ENCODE measurements at regions of chr11 and their contacts with region 1.

Region 1: GRCh38 chr11:44065841-44066731 is at the start of gene ACCS:
- DNase-seq: peak; percentile 87 to 95
- ATAC-seq: peak; percentile 92 to 93
- H3K4me3 ChIP-seq: peak within 1 kb of the TSS; percentile 66 to 80 (median 72)
- H3K27ac ChIP-seq: peak within 1 kb of the TSS; percentile 80 to 86 (median 86)
- H3K4me1 ChIP-seq: peaks cover 5 to 7% of the 10 kb centered on the region in 2 donors
- H3K27me3 ChIP-seq: no peaks in the 10 kb centered on the region
- CTCF ChIP-seq: peak; percentile 47 to 86 (median 67)
- POLR2A ChIP-seq: peak; percentile 39 to 53
- total RNA-seq, gene ACCS: 0.58 to 4.0 (median 1.8) TPM

Region 2: DNA sequence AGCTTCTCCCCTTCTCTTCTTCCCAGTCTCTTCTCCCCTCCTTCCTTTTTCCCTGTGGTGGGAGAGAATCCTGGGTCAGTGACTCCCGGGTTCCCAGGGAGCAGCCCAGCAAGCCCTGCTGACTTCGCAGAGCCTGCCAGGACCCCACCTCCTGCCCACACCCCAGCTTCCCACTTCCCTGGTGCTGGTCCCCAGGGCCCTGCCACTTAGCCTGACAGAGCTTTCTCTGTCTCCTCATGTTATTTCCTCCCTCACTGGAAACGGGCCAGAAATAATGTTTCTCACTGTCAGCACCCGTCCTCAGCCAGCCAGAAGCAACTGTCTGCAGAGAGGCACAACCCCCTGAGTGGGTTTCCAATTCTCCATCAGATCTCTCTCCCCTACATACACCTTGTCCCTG is 96.5 kb before region 1 on chr11:
- in situ Hi-C with region 1: loop called in 1 of 4 experiments (anchors 25 kb)
- intact Hi-C with region 1: no loop called
- DNase-seq: no peak
- ATAC-seq: no peak
- H3K4me3 ChIP-seq: no peak overlapping the region
- H3K27ac ChIP-seq: no peak overlapping the region
- H3K4me1 ChIP-seq: no peaks in the 10 kb centered on the region
- H3K27me3 ChIP-seq: no peaks in the 10 kb centered on the region
- CTCF ChIP-seq: no peak
- POLR2A ChIP-seq: no peak

Region 3: DNA sequence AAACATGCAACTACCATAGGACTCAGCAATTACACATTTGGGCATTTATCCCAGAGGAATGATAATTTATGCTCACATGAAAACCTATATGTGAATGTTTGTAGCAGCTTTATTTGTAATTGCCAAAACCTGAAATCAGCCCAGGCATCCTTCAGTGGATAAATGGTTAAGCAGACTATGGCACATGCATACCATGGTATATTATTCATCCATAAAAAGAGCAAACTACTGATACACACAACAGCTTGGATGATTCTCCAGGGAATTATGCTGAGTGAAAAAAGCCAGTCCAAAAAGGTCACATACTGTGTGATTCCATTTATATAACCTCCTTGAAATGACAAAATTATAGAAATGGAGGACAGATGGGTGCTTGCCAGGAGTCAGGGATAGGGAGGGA is 157.2 kb after region 1 on chr11:
- in situ Hi-C with region 1: no loop called
- intact Hi-C with region 1: no loop called
- DNase-seq: no peak
- ATAC-seq: no peak
- H3K4me3 ChIP-seq: no peak overlapping the region
- H3K27ac ChIP-seq: no peak overlapping the region
- H3K4me1 ChIP-seq: peaks cover 6 to 25% of the 10 kb centered on the region in 2 donors
- H3K27me3 ChIP-seq: no peaks in the 10 kb centered on the region
- CTCF ChIP-seq: no peak
- POLR2A ChIP-seq: no peak